ENCODE measurements at regions of chr22 and their contacts with region 1.

Region 1: GRCh38 chr22:34966980-34967565 is 98.9 kb upstream of the ISX start:
- DNase-seq: no peak
- ATAC-seq: no peak
- H3K4me3 Mint-ChIP-seq: no peak overlapping the region
- H3K27ac Mint-ChIP-seq: no peak overlapping the region
- H3K4me1 Mint-ChIP-seq: no peaks in the 10 kb centered on the region
- H3K27me3 Mint-ChIP-seq: peaks cover 4% of the 10 kb centered on the region

Region 2: GRCh38 chr22:34886812-34887211 is 80.3 kb before region 1 on chr22:
- CTCF ChIA-PET with region 1: no interaction called
- POLR2A ChIA-PET with region 1: interaction called, 13 read pairs
- intact Hi-C with region 1: no loop called
- DNase-seq: no peak
- ATAC-seq: no peak
- H3K4me3 Mint-ChIP-seq: no peak overlapping the region
- H3K27ac Mint-ChIP-seq: no peak overlapping the region
- H3K4me1 Mint-ChIP-seq: no peaks in the 10 kb centered on the region
- H3K27me3 Mint-ChIP-seq: peaks cover 1% of the 10 kb centered on the region

Measured in activated CD4-positive, alpha-beta T cell treated with anti-CD3 and anti-CD28 coated beads for 36 hours (primary cell).